ENCODE measurements at regions of chr3 and their contacts with region 1.

Region 1: GRCh38 chr3:138890555-138891187 is 55.9 kb upstream of the PIK3CB start:
- DNase-seq: no peak
- H3K4me3 ChIP-seq: no peak overlapping the region
- H3K27ac ChIP-seq: peak overlapping the region; percentile 64
- H3K4me1 ChIP-seq: peaks cover 4% of the 10 kb centered on the region
- H3K27me3 ChIP-seq: no peaks in the 10 kb centered on the region
- CTCF ChIP-seq: no peak
- POLR2A ChIP-seq: no peak

Region 2: DNA sequence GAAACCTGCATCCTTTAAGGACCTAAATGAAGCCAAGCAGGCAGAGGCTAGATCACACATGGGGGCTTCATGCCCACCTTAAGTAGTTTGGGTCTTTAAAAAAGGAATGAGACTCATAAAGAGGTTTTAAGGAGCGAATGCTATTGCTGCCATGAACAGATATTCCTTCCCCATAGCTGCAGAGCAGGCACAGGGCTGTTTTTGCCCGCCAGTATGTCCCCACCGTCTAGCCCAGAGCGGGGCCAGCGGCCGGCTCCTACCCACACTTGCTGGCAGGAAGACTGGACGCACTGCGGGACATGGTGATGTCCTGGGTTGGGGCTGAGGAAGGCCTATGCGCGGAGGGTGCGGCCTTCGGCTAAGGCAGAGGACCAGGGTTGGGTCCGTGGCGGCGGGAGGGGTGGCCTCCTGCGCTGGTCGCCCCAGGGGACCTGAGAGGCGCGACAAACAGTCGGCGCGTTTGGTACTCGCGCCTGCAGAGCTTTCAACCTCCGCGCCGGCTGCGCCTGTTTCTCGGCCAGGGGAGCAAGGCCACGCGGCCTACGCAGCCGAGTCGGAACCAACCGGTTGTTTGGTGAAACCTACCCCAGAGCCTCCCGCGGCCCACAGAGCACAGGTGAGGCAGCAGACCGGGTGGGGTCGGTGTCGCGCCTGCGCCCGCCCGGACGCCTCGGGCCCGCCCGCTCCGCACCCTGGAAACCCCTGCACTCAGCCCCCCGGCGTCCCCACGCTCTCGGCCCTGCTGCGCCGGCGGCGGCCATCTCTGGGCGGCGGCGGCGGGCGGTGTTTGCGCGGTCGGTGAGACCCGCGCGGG is 282.1 kb before region 1 on chr3 and contains the start of gene FAIM:
- CTCF ChIA-PET with region 1: no interaction called
- POLR2A ChIA-PET with region 1: no interaction called
- dilution Hi-C with region 1: no loop called
- intact Hi-C with region 1: no loop called
- DNase-seq: peak; percentile 77
- H3K4me3 ChIP-seq: peak within 1 kb of the TSS; percentile 45 to 86 (median 69)
- H3K27ac ChIP-seq: peak within 1 kb of the TSS; percentile 66
- H3K4me1 ChIP-seq: peaks cover 4% of the 10 kb centered on the region
- H3K27me3 ChIP-seq: no peaks in the 10 kb centered on the region
- CTCF ChIP-seq: no peak
- POLR2A ChIP-seq: peak; percentile 10
- total RNA-seq, gene FAIM: 9.9 and 11.9 TPM in 2 replicates

Region 3: DNA sequence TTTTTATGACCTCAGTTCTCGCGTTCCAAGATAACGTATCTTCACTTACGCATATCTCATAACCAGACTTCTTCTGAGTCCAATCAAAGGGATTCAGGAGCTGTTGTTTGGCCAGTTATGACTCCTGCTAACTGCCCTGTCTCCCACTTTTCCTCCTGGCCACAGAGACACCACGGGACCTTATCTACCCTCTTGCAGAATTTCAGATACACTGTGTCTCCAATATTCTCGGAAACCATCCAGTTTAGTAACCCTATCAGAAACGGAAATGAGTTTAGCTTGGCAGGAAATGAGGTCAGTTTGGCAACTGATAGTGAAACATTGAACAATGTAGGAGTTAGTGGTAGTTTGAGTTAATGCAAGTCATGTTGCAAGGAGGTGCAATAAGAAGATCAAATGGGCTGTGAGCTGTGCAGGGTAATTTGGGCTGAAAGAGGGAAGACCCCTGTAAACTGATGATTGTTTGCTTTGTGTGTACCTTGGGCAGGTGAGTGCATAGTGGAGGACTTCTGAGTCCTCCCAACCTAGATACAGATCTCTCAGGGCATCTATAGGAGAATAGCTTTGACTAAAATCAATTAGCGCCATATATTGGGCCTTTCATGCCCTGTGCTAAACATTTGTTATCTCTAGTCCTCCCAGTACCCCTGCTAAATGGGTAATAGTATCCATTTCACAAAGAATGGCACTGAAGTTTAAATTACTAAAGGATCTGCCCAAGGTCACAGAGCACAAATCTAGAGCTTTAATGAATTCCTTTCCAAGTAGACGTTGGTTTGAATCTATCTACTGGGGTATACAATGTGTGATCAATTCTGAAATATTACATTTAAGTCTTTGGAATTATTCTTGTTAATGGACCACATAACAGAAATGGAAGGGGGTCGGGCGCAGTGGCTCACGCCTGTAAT is 14.7 kb before region 1 on chr3:
- CTCF ChIA-PET with region 1: interaction called, 9 read pairs
- POLR2A ChIA-PET with region 1: no interaction called
- dilution Hi-C with region 1: no loop called
- intact Hi-C with region 1: loop called (anchors 1 kb)
- DNase-seq: peak; percentile 86
- H3K4me3 ChIP-seq: no peak overlapping the region
- H3K27ac ChIP-seq: peak overlapping the region; percentile 79
- H3K4me1 ChIP-seq: peaks cover 13% of the 10 kb centered on the region
- H3K27me3 ChIP-seq: no peaks in the 10 kb centered on the region
- CTCF ChIP-seq: no peak
- POLR2A ChIP-seq: no peak

Region 4: GRCh38 chr3:139044366-139045210 is 153.9 kb after region 1 on chr3 and contains the start of gene PRR23C:
- CTCF ChIA-PET with region 1: no interaction called
- POLR2A ChIA-PET with region 1: no interaction called
- dilution Hi-C with region 1: no loop called
- intact Hi-C with region 1: no loop called
- DNase-seq: no peak
- H3K4me3 ChIP-seq: no peak within 1 kb of the TSS
- H3K27ac ChIP-seq: no peak within 1 kb of the TSS
- H3K4me1 ChIP-seq: no peaks in the 10 kb centered on the region
- H3K27me3 ChIP-seq: no peaks in the 10 kb centered on the region
- CTCF ChIP-seq: no peak
- POLR2A ChIP-seq: no peak
- total RNA-seq, gene PRR23C: not detected in 2 replicates